ENCODE measurements at regions of chr5 and their contacts with region 1.

Region 1: GRCh38 chr5:146633323-146633764 is 117.4 kb upstream of the GPR151 start:
- DNase-seq: no peak
- ATAC-seq: no peak
- H3K4me3 ChIP-seq: no peak overlapping the region
- H3K27ac ChIP-seq: no peak overlapping the region
- H3K4me1 ChIP-seq: no peaks in the 10 kb centered on the region
- H3K27me3 ChIP-seq: peaks cover 0 to 2% of the 10 kb centered on the region in 2 experiments; a peak in 1 of 4 replicates
- CTCF ChIP-seq: no peak
- EP300 ChIP-seq: no peak
- POLR2A ChIP-seq: no peak
- RAD21 ChIP-seq: no peak

Region 2: GRCh38 chr5:145723516-145723915 is 909.8 kb before region 1 on chr5:
- CTCF ChIA-PET with region 1: no interaction called
- POLR2A ChIA-PET with region 1: no interaction called
- RAD21 ChIA-PET with region 1: no interaction called
- SMC1A ChIA-PET with region 1: no interaction called
- in situ Hi-C with region 1: no loop called
- intact Hi-C with region 1: loop called (anchors 5 kb)
- DNase-seq: no peak
- ATAC-seq: no peak
- H3K4me3 ChIP-seq: no peak overlapping the region
- H3K27ac ChIP-seq: no peak overlapping the region
- H3K4me1 ChIP-seq: no peaks in the 10 kb centered on the region
- H3K27me3 ChIP-seq: no peaks in the 10 kb centered on the region
- CTCF ChIP-seq: no peak
- EP300 ChIP-seq: no peak
- POLR2A ChIP-seq: no peak
- RAD21 ChIP-seq: no peak